ENCODE measurements at regions of chr10 and their contacts with region 1.

Region 1: GRCh38 chr10:5794236-5794635 is 19.0 kb downstream of the GDI2 start:
- DNase-seq: no peak
- H3K4me3 ChIP-seq: no peak overlapping the region
- CTCF ChIP-seq: no peak
- POLR2A ChIP-seq: no peak

Region 2: GRCh38 chr10:5746197-5746596 is 48.0 kb before region 1 on chr10:
- intact Hi-C with region 1: loop called (anchors 10 kb)
- DNase-seq: no peak
- H3K4me3 ChIP-seq: no peak overlapping the region
- CTCF ChIP-seq: no peak
- POLR2A ChIP-seq: no peak